Right ventricle myocardium superior (tissue), 1 donor: ENCODE measurements at regions of chr19 and their contacts with region 1.

Region 1: GRCh38 chr19:38229585-38230073 is 5.6 kb upstream of the DPF1 start:
- DNase-seq: peak; percentile 71
- ATAC-seq: peak; percentile 76

Region 2: GRCh38 chr19:37896180-37896579 is 333.4 kb before region 1 on chr19:
- intact Hi-C with region 1: loop called (anchors 5 kb)
- DNase-seq: no peak
- ATAC-seq: peak; percentile 59

Region 3: GRCh38 chr19:38142176-38143035 is 87.2 kb before region 1 on chr19:
- intact Hi-C with region 1: loop called (anchors 5 kb)
- DNase-seq: peak; percentile 63
- ATAC-seq: peak; percentile 81